Endothelial cell of umbilical vein (primary cell): ENCODE measurements at regions of chr2 and their contacts with region 1.

Region 1: DNA sequence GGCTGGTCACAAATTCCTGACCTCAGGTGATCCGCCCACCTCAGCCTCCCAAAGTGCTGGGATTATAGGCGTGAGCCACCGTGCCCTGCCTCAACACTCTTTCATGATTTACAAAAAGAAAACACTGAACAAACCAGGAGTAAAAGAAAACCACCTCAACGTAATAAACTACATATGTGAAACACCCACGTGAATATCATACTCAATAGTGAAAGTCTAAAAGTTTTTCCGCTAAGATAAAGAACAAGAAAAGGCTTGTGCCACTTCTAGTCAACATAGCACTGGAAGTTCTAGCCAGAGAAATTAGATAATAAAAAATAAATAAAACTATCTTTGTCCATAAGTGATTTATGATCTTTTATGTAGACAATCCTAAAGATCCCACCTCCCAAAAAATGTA is 68.5 kb downstream of the ROCK2 start:
- DNase-seq: no peak
- H3K4me3 ChIP-seq: no peak overlapping the region
- H3K27ac ChIP-seq: no peak overlapping the region
- H3K4me1 ChIP-seq: peaks cover 3% of the 10 kb centered on the region
- H3K27me3 ChIP-seq: no peaks in the 10 kb centered on the region
- CTCF ChIP-seq: no peak
- POLR2A ChIP-seq: no peak

Region 2: GRCh38 chr2:10538224-10538894 is 737.6 kb before region 1 on chr2:
- CTCF ChIA-PET with region 1: no interaction called
- POLR2A ChIA-PET with region 1: no interaction called
- dilution Hi-C with region 1: no loop called
- intact Hi-C with region 1: no loop called
- DNase-seq: no peak
- H3K4me3 ChIP-seq: no peak overlapping the region
- H3K27ac ChIP-seq: no peak overlapping the region
- H3K4me1 ChIP-seq: no peaks in the 10 kb centered on the region
- H3K27me3 ChIP-seq: no peaks in the 10 kb centered on the region
- CTCF ChIP-seq: no peak
- POLR2A ChIP-seq: no peak

Region 3: GRCh38 chr2:11250400-11251196 is 25.3 kb before region 1 on chr2:
- CTCF ChIA-PET with region 1: interaction called, 4 read pairs
- POLR2A ChIA-PET with region 1: no interaction called
- dilution Hi-C with region 1: no loop called
- intact Hi-C with region 1: loop called (anchors 2 kb)
- DNase-seq: peak; percentile 26
- H3K4me3 ChIP-seq: no peak overlapping the region
- H3K27ac ChIP-seq: no peak overlapping the region
- H3K4me1 ChIP-seq: peaks cover 8% of the 10 kb centered on the region
- H3K27me3 ChIP-seq: no peaks in the 10 kb centered on the region
- CTCF ChIP-seq: no peak
- POLR2A ChIP-seq: no peak